Mammary epithelial cell (primary cell): ENCODE measurements at regions of chr3 and their contacts with region 1.

Region 1: DNA sequence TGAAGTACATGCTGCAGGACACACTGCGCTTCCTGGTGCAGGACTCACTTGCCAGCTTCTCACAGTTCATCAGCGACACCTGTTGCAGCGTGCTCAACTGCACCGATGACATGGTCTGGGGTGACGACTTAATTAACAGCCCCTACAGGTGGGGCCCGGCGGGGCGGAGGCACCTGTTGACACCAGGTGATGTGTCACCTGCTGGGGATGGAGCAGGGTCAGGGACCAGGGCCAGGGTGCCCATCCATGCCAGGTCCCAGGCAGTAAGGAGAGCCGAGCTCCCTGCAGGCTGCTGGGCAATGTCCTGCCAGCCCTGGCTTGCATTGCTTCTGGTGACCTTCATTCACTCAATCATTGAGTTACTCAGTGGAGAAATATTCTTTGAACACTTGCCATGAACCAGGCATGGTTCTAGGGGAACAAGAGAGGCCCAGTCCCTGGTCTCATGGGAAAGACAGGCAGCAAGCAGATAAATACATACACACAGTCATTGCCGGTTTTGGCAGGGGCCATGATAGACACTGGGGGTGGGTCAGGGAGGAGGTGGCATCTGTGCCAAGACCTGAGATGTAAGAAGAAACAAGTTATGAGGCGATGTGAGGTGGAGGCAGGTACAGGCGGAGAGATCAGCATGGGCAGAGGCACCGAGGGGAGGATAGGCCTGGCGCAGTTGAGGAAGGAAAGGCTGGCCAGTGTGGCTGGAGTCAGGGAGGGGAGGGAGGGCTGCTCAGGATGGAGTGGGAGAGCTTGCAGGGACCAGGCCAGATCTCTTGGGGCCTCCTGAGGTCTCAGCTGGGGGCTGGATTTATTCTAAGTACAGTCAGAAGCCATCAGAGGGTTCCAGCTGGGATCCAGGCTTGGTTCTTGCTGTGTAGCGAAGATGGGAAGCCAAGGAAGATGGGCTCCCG is 30.8 kb downstream of the DNAH1 start:
- DNase-seq: peak; percentile 6
- H3K4me3 ChIP-seq: no peak overlapping the region
- H3K27ac ChIP-seq: no peak overlapping the region
- H3K4me1 ChIP-seq: peaks cover 5% of the 10 kb centered on the region
- H3K27me3 ChIP-seq: no peaks in the 10 kb centered on the region
- CTCF ChIP-seq: no peak

Region 2: DNA sequence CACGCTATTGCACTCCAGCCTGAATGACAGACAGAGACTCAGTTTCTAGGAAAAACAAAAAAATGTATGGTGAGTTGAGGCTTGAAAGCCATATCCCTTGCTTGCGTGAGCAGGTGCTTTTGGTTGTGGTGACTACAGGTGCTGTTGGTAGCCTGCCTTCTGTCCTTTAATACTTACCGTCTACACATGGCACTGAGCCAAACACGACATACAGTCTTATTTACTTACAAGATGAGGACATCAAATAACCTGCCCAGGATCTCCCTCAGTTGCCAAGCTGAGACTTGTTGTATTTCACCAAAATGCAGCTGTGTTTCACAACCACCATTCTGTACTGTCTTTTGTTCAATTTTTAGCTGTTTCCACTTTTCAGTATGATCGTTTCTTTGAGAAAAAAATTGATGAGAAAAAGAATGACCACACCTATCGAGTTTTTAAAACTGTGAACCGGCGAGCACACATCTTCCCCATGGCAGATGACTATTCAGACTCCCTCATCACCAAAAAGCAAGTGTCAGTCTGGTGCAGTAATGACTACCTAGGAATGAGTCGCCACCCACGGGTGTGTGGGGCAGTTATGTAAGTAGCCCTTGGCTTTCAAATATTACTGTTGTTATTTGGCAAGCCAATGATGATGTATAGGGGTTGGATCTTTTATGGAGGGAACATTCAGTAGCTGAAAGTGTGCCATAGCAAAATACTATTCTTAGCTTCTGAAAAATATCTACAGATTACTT is 142.4 kb before region 1 on chr3:
- CTCF ChIA-PET with region 1: no interaction called
- dilution Hi-C with region 1: no loop called
- in situ Hi-C with region 1: no loop called
- intact Hi-C with region 1: no loop called
- DNase-seq: peak; percentile 72
- H3K4me3 ChIP-seq: no peak overlapping the region
- H3K27ac ChIP-seq: no peak overlapping the region
- H3K4me1 ChIP-seq: peaks cover 23% of the 10 kb centered on the region
- H3K27me3 ChIP-seq: no peaks in the 10 kb centered on the region
- CTCF ChIP-seq: no peak

Region 3: GRCh38 chr3:52245322-52246263 is 101.3 kb before region 1 on chr3 and contains the start of gene PPM1M:
- CTCF ChIA-PET with region 1: no interaction called
- dilution Hi-C with region 1: loop called (anchors 5 kb)
- in situ Hi-C with region 1: no loop called
- intact Hi-C with region 1: no loop called
- DNase-seq: peak; percentile 31
- H3K4me3 ChIP-seq: peak within 1 kb of the TSS in 2 of 3 experiments; percentile 20 to 28
- H3K27ac ChIP-seq: no peak within 1 kb of the TSS
- H3K4me1 ChIP-seq: peaks cover 29% of the 10 kb centered on the region
- H3K27me3 ChIP-seq: no peaks in the 10 kb centered on the region
- CTCF ChIP-seq: no peak
- total RNA-seq, gene PPM1M: 4.8 to 8.7 TPM